Psoas muscle (tissue), 8 donors: ENCODE measurements at regions of chr2 and their contacts with region 1.

Region 1: DNA sequence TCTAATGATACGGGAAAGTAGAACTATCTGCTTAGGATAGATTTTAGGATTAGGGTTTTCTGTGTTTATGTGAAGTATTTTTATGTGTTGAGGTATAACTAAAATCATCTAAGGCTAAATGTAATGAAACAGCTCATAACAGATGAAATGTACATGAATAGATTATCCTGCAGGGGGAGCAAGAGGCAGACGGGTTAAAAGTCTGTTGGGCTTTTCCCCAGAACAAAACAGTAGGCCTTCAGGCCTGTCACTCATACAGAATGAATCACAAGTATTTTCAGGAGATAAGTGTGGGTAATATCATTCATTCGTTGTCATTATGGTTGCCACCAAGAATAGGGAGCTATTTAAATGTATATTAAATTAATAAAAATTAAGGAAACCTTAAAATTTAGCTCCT is 107.9 kb upstream of the IL1R2 start:
- DNase-seq: no peak
- ATAC-seq: peak; percentile 52 to 85 (median 80)
- H3K4me3 ChIP-seq: no peak overlapping the region
- H3K27ac ChIP-seq: no peak overlapping the region
- H3K4me1 ChIP-seq: peaks cover 6% of the 10 kb centered on the region
- H3K27me3 ChIP-seq: no peaks in the 10 kb centered on the region
- CTCF ChIP-seq: peak; percentile 56

Region 2: DNA sequence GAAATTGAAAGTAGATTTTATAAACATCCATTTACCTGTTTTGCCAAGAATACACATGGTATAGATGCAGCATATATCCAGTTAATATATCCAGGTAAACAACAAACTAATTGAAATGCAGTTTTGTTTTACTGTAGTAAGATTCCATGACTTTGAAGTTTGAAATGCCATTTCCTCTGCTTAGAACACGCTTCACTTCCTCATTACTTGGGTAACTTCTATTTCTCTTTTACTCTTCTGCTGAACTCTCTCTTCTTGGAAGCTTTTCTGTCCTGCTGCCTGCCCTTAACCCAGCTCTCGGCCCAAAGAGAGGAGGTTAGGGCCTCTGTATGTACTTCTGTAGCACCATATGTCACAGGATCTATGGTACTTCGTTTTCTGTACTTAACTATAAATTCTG is 288.9 kb after region 1 on chr2:
- intact Hi-C with region 1: loop called in 1 of 2 experiments (anchors 10 kb)
- DNase-seq: no peak
- ATAC-seq: no peak
- H3K4me3 ChIP-seq: no peak overlapping the region
- H3K27ac ChIP-seq: no peak overlapping the region
- H3K4me1 ChIP-seq: no peaks in the 10 kb centered on the region
- H3K27me3 ChIP-seq: no peaks in the 10 kb centered on the region
- CTCF ChIP-seq: no peak